ENCODE measurements at regions of chr9 and their contacts with region 1.

Region 1: GRCh38 chr9:110744753-110745384 is 76.3 kb downstream of the MUSK start:
- DNase-seq: peak in 1 of 2 donors; percentile 93
- H3K4me3 ChIP-seq: no peak overlapping the region
- H3K27ac ChIP-seq: peak overlapping the region; percentile 90
- H3K4me1 ChIP-seq: peaks cover 44% of the 10 kb centered on the region
- H3K27me3 ChIP-seq: no peaks in the 10 kb centered on the region
- CTCF ChIP-seq: no peak
- POLR2A ChIP-seq: no peak

Region 2: GRCh38 chr9:110650991-110651411 is 93.9 kb before region 1 on chr9:
- intact Hi-C with region 1: loop called (anchors 5 kb)
- DNase-seq: no peak
- H3K4me3 ChIP-seq: no peak overlapping the region
- H3K27ac ChIP-seq: peak overlapping the region; percentile 51
- H3K4me1 ChIP-seq: peaks cover 9% of the 10 kb centered on the region
- H3K27me3 ChIP-seq: no peaks in the 10 kb centered on the region
- CTCF ChIP-seq: no peak
- POLR2A ChIP-seq: no peak

Region 3: DNA sequence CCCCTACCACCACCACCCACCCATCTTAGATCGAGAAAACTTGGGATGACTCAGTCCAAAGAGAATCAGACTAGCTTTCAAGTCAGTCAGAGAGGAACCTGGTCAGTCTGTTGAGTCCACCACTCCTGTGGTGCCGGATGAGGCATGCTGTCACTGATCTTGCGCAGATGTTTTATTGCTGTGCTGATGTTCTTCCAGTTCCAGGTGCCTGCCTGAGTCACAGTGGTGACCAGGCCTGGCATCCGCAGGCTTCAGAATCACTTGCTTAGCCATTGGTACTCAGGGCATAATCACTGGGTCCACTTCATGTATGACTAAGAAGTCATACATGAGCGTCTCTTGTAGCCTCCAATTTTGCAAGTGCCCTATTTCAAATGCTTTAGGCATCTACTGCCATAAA is 37.8 kb after region 1 on chr9:
- intact Hi-C with region 1: loop called (anchors 1 kb)
- DNase-seq: no peak
- H3K4me3 ChIP-seq: no peak overlapping the region
- H3K27ac ChIP-seq: no peak overlapping the region
- H3K4me1 ChIP-seq: peaks cover 9% of the 10 kb centered on the region
- H3K27me3 ChIP-seq: no peaks in the 10 kb centered on the region
- CTCF ChIP-seq: no peak
- POLR2A ChIP-seq: no peak

Measured in vagina (tissue), 2 donors.